ENCODE measurements at regions of chr19 and their contacts with region 1.

Region 1: DNA sequence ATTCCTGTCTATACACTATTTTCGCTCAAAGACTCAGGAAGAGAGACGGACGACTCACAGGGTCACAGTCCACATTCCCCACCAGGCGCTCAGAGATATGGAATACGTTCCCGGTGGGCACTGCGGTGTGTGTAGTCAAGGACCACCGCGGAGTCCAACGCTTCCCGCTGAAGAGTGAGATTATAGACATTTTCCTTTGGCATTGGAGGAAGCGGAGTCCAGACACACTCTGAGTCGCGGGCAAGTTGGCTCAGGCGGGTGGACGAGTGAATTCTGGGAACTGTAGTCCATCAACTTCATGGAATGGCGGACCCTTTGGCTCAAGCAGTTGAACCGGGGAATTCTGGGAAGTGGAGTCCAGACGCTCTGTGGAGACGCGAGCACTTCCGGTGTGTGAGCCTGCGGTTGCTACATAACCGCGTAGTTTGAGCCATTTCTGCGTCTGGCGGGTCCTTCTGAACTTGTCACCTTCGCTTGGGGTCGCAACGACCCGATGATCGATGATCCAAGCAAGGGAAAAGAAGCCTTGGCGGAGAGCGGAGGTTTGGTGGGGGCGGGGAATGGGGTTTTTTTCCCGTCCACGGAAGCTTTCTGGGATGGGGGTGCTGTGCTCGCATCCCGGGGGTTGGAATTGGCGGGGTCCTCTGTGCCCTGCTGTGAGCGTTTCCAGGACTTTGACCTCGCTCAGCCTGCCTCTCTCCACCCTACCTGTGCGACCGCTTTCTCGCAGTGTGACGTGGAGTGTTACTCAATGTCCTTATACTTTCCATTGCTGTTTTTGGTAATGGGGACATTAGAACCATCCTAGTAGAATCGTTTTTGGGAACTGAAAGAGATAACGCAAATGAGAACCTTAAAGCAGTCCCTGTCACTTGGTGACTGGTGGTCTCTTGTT is at the start of gene ZNF230:
- DNase-seq: peak; percentile 87
- CTCF ChIP-seq: no peak

Region 2: DNA sequence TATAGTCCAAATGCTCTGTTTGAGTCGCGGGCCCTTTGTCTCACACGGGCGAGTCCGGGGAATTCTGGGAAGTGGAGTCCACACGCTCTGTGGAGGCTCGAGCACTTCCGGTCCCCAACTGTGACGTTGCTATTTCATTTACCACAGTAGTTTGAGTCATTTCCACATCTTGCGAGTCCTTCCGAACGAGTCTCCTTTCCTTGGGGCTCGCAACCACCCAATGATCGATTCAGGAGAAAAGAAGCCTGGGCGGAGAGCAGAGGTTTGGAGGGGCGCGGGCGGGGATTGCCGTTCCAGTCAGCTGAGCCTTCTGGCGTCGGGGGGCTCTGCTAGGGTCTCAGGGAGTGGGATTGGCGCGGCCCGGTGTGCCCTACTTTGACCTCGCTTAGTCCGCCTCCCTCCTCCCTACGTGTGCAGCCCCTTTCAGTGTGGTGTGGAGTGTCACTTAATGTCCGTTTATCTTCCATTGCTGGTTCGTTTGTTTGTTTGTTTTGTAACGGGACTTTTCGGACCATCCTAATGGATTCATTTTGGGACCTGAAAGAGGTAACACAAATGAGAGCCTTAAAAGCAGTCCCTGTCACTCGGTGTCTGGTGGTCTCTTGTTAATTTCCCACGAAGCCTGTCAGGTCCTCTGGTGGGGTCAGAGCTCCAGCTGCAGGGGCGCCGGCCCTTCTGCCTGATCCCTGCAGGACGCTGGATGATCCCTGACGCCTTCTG is 22.6 kb after region 1 on chr19 and contains the start of gene ZNF222:
- CTCF ChIA-PET with region 1: no interaction called
- POLR2A ChIA-PET with region 1: no interaction called
- DNase-seq: peak; percentile 82
- CTCF ChIP-seq: no peak

Region 3: GRCh38 chr19:44820648-44821609 is 818.1 kb after region 1 on chr19:
- CTCF ChIA-PET with region 1: no interaction called
- POLR2A ChIA-PET with region 1: interaction called, 10 read pairs
- DNase-seq: no peak
- CTCF ChIP-seq: no peak